ENCODE measurements at regions of chr4 and their contacts with region 1.

Region 1: GRCh38 chr4:169757575-169758184 is at the start of gene HPF1:
- DNase-seq: peak; percentile 80 to 94 (median 91)
- H3K4me3 ChIP-seq: peak within 1 kb of the TSS; percentile 62 to 97 (median 85)
- H3K27ac ChIP-seq: peak within 1 kb of the TSS; percentile 4 to 90 (median 78)
- H3K27me3 ChIP-seq: no peaks in the 10 kb centered on the region
- CTCF ChIP-seq: peak in 40 of 56 donors; percentile 10 to 57 (median 34)
- total RNA-seq, gene HPF1: 12.5 to 45.8 (median 29.3) TPM

Region 2: DNA sequence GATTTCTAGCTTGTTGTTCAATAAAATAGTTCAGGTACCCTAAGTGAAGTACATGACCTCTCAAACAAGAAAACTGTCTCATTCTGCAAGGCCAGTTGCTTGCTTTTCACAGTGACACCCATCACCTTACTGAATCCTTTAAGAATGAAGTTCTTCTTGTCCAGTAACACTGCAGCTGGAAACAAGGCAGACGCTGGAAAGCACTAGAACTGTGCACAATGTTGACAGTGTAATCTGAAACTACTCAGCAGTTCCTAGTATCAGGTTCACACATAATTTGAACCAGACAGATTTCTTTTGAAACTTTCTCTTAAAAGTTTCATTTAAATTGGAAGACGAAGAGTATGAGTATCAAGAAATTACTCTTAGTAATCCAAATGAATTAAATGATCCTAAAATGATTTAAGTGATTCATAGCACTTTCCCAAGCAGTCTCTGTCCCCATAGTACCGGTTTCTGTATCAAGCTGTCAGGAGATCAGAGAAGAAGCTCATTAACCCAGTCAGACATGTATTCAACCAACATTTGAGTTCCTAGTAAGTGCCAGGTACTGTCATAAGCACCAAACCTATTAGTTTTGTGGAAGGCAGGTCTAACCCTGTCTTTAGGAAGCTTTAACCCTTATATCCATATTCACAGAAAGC is 1197.4 kb before region 1 on chr4:
- intact Hi-C with region 1: no loop called
- DNase-seq: no peak
- H3K4me3 ChIP-seq: no peak overlapping the region
- H3K27ac ChIP-seq: no peak overlapping the region
- H3K27me3 ChIP-seq: peaks cover 0 to 9% (median 0%) of the 10 kb centered on the region in 45 donors
- CTCF ChIP-seq: no peak

Region 3: GRCh38 chr4:169573889-169574288 is 183.8 kb before region 1 on chr4:
- intact Hi-C with region 1: no loop called
- DNase-seq: no peak
- H3K4me3 ChIP-seq: no peak overlapping the region
- H3K27ac ChIP-seq: no peak overlapping the region
- H3K27me3 ChIP-seq: no peaks in the 10 kb centered on the region
- CTCF ChIP-seq: no peak

Region 4: GRCh38 chr4:169791527-169792156 is 34.0 kb after region 1 on chr4:
- intact Hi-C with region 1: loop called in 1 of 2 experiments (anchors 2 kb)
- DNase-seq: peak in 9 of 10 donors; percentile 21 to 75 (median 67)
- H3K4me3 ChIP-seq: peak overlapping the region; percentile 8 to 71 (median 50)
- H3K27ac ChIP-seq: peak overlapping the region in 52 of 59 donors; percentile 2 to 82 (median 55)
- H3K27me3 ChIP-seq: no peaks in the 10 kb centered on the region
- CTCF ChIP-seq: peak; percentile 49 to 81 (median 70)

Measured in dorsolateral prefrontal cortex (tissue), 120 donors.